Thyroid gland (tissue), 4 donors: ENCODE measurements at regions of chr11 and their contacts with region 1.

Region 1: GRCh38 chr11:61581030-61581928 is at the start of gene SYT7:
- DNase-seq: peak; percentile 96 to 97
- H3K4me3 ChIP-seq: peak within 1 kb of the TSS in 1 of 3 donors; percentile 55
- H3K27ac ChIP-seq: peak within 1 kb of the TSS in 1 of 3 donors; percentile 71
- H3K4me1 ChIP-seq: peaks cover 0 to 24% of the 10 kb centered on the region in 2 donors
- H3K27me3 ChIP-seq: no peaks in the 10 kb centered on the region
- CTCF ChIP-seq: peak in 3 of 6 experiments; percentile 19 to 50 (median 20)
- POLR2A ChIP-seq: peak; percentile 18 to 27
- total RNA-seq, gene SYT7: 5.2 to 12.6 (median 8.8) TPM

Region 2: GRCh38 chr11:61627567-61628445 is 46.5 kb after region 1 on chr11:
- intact Hi-C with region 1: loop called (anchors 5 kb)
- DNase-seq: peak; percentile 81 to 82
- H3K4me3 ChIP-seq: no peak overlapping the region
- H3K27ac ChIP-seq: peak overlapping the region in 2 of 3 donors; percentile 20 to 56
- H3K4me1 ChIP-seq: peaks cover 0 to 16% of the 10 kb centered on the region in 2 donors
- H3K27me3 ChIP-seq: no peaks in the 10 kb centered on the region
- CTCF ChIP-seq: peak; percentile 60 to 93 (median 84)
- POLR2A ChIP-seq: no peak

Region 3: GRCh38 chr11:61637287-61637686 is 56.0 kb after region 1 on chr11:
- intact Hi-C with region 1: loop called (anchors 2 kb)
- DNase-seq: no peak
- H3K4me3 ChIP-seq: no peak overlapping the region
- H3K27ac ChIP-seq: no peak overlapping the region
- H3K4me1 ChIP-seq: no peaks in the 10 kb centered on the region
- H3K27me3 ChIP-seq: no peaks in the 10 kb centered on the region
- CTCF ChIP-seq: no peak
- POLR2A ChIP-seq: no peak